ENCODE measurements at regions of chr18 and their contacts with region 1.

Region 1: DNA sequence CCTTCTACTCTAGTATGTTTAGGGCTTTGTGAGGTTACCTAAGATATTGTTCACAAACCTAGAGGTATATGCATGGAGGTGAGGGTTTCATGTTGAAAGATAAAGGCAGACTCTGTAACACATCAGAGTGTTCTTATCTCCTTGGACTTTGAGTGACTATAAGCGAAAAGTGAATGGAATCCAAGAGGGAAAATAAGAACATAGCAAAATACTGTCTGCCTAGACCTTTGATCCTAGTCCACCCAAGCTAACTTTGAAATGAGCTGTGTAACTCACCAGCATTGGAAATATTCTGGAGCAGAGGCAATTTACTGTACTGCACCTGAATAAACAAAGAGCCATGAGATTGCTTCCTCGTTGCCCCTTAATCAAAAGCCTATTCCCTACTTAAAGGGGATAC is 28.2 kb upstream of the GALNT1 start:
- DNase-seq: no peak
- H3K4me3 ChIP-seq: no peak overlapping the region
- H3K27ac ChIP-seq: no peak overlapping the region
- H3K4me1 ChIP-seq: no peaks in the 10 kb centered on the region
- H3K27me3 ChIP-seq: no peaks in the 10 kb centered on the region
- CTCF ChIP-seq: no peak
- POLR2A ChIP-seq: no peak

Region 2: GRCh38 chr18:35050028-35050546 is 503.2 kb before region 1 on chr18:
- intact Hi-C with region 1: no loop called
- DNase-seq: no peak
- H3K4me3 ChIP-seq: no peak overlapping the region
- H3K27ac ChIP-seq: peak overlapping the region in 1 of 2 donors; percentile 10
- H3K4me1 ChIP-seq: no peaks in the 10 kb centered on the region
- H3K27me3 ChIP-seq: no peaks in the 10 kb centered on the region
- CTCF ChIP-seq: no peak
- POLR2A ChIP-seq: no peak

Region 3: DNA sequence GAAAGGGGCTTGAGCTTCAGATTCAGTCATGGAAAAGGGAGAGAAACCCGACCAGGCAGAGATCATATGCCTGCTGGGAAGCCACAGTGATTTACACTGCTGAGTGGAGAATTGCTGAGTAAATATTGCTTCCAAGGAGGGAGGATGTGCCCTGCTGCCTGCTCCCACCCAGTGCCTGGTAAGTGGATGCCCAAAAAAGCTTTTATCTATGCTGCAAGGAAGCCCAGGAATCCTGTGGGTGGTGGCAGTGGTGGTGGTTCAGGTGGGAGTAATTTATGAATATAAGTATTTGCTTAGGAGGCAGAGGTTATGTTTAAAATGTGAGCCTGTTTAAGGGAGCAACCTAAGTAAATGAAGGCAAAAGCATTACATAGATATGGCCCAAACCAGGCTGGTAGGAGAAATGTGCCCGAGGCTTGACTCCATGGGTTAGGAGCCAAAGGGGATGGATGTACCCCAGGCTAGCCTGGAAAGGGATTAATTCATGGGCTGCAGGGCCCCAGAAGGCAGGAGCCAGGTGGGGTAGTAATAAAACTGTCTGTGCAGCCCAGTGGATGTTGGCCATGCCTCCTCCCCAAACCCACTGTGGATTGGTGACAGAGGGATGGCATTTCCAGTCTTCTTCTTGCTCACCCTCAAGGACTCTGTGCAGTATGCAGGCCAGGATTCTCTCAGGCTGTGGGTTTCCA is 94.8 kb before region 1 on chr18:
- intact Hi-C with region 1: no loop called
- DNase-seq: no peak
- H3K4me3 ChIP-seq: no peak overlapping the region
- H3K27ac ChIP-seq: peak overlapping the region in 1 of 2 donors; percentile 52
- H3K4me1 ChIP-seq: no peaks in the 10 kb centered on the region
- H3K27me3 ChIP-seq: no peaks in the 10 kb centered on the region
- CTCF ChIP-seq: no peak
- POLR2A ChIP-seq: no peak

Region 4: DNA sequence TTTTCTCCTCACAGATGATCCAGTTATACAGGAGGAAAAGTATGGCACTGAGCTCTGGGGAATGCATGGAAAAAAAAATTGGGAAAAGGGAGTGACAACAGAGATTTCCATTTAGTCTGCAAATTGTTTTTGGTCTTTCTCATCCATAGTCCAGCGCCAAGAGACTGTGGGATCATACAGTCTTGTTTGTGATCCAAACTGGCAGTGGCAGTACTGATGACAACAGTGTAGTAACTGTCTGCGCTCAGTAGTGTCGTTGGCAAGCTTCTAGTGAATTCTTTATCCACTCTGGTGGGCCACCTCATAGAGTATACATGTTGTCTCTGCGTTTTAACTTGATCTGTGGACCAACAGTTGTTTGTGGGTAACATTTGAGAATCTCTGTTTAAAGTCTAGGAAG is 66.2 kb after region 1 on chr18:
- intact Hi-C with region 1: loop called (anchors 2 kb)
- DNase-seq: peak in 1 of 2 donors; percentile 46
- H3K4me3 ChIP-seq: no peak overlapping the region
- H3K27ac ChIP-seq: peak overlapping the region; percentile 23 to 61
- H3K4me1 ChIP-seq: peaks cover 0 to 6% of the 10 kb centered on the region in 2 donors
- H3K27me3 ChIP-seq: no peaks in the 10 kb centered on the region
- CTCF ChIP-seq: no peak
- POLR2A ChIP-seq: no peak